ENCODE measurements at regions of chr3 and their contacts with region 1.

Region 1: DNA sequence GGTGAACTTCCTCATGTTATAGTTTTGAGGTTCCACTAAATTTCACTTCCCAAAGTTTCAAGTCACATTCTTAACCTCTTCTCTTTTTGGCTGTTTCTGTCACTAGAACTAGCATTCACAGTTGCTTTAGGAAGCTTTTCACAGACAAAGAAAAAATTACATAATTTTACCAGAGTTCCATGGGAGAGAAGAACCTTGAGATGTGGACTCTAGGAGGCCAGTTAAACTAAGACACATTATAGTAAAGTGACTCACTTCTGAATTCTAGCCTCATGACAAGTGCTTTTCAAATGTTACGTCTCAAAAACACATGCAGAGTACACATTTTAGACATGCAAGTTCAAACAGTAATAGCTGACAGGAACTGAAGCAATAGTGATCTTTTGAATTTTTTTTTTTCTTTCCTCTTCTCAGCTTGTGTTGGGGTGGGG is 39.9 kb upstream of the LRTM1 start:
- H3K4me3 Mint-ChIP-seq: peak overlapping the region; percentile 61
- H3K27ac Mint-ChIP-seq: peak overlapping the region; percentile 37
- H3K4me1 Mint-ChIP-seq: peaks cover 73% of the 10 kb centered on the region
- H3K27me3 Mint-ChIP-seq: peaks cover 16% of the 10 kb centered on the region

Region 2: DNA sequence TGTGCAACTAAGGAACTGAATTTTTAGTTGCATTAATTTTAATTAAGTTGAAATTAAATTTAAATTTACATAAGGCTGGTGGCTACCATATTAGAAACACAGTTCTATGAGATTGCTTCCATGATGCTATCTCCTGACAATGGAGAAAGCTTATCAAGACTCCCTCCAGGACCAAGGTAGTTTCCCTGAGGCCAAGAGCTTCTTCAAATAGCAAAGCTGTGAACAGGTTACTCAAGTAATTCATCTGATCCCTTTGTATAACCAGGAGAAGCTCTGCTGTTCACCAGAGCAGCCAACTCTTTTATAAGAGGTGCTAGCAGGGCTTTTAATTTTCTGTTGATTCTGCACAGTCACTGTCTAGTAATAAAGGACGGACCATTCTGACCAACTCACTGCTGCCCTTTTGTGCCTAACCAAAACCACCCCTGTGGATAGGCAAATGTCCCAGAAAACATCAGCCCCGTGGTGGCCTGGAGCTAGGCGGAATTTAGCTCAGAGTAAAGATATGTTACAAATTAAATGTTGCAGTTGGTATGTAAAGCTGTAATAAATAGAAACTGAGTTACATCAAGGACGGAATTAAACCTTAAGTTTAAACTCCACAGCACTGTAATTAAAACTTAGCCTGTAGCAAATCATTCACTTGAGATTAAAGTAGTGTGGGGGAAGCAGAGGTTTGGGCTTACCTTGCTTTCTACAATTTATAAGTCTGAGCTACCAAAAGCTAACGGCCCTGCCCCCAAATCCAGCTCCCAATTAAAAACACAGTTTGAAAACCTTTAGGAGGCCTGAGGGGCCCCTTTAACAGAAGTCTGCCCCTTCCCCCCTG is 15.7 kb after region 1 on chr3:
- intact Hi-C with region 1: loop called (anchors 2 kb)
- H3K4me3 Mint-ChIP-seq: no peak overlapping the region
- H3K27ac Mint-ChIP-seq: no peak overlapping the region
- H3K4me1 Mint-ChIP-seq: peaks cover 43% of the 10 kb centered on the region
- H3K27me3 Mint-ChIP-seq: no peaks in the 10 kb centered on the region

Region 3: DNA sequence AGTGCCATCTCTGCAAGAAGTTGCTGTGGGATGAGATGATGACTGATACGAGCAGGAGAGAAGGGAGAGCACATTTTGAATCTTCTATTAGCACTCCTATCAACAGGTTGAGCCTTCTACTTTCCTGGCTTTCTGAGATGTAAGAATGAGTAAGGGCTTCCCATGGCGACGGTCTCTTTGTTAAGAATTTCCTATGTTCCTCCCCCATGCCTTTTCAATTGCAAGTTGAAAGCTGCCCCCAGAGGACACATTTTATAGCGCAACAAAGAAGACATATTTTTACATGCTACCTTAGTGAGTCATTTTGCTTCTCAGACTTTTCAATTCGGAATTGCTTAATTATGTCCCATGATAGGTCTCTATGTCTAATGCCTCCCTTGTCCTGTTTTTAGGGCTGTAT is 31.4 kb after region 1 on chr3:
- intact Hi-C with region 1: loop called (anchors 5 kb)
- H3K4me3 Mint-ChIP-seq: no peak overlapping the region
- H3K27ac Mint-ChIP-seq: no peak overlapping the region
- H3K4me1 Mint-ChIP-seq: peaks cover 3% of the 10 kb centered on the region
- H3K27me3 Mint-ChIP-seq: no peaks in the 10 kb centered on the region

Region 4: DNA sequence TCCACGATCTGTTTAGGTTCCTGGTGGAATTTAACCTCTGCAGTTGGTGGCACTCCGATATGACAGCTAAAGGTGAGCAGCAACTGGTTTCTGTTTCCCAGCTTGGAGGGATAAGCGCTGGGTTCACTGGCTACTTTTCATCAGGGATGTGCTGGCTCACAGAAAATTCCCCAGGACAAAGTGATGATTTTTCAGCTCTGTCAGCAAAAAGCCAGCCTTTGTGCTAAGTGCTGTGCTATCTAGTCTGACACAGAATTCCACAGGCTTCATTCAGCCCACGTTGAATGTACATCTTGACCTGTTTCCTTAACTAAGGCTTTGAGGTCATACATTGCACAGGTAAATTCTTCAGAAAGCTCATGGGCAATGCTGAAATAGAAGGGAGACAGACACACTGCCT is 41.6 kb after region 1 on chr3:
- intact Hi-C with region 1: no loop called
- H3K4me3 Mint-ChIP-seq: no peak overlapping the region
- H3K27ac Mint-ChIP-seq: no peak overlapping the region
- H3K4me1 Mint-ChIP-seq: no peaks in the 10 kb centered on the region
- H3K27me3 Mint-ChIP-seq: no peaks in the 10 kb centered on the region

Region 5: DNA sequence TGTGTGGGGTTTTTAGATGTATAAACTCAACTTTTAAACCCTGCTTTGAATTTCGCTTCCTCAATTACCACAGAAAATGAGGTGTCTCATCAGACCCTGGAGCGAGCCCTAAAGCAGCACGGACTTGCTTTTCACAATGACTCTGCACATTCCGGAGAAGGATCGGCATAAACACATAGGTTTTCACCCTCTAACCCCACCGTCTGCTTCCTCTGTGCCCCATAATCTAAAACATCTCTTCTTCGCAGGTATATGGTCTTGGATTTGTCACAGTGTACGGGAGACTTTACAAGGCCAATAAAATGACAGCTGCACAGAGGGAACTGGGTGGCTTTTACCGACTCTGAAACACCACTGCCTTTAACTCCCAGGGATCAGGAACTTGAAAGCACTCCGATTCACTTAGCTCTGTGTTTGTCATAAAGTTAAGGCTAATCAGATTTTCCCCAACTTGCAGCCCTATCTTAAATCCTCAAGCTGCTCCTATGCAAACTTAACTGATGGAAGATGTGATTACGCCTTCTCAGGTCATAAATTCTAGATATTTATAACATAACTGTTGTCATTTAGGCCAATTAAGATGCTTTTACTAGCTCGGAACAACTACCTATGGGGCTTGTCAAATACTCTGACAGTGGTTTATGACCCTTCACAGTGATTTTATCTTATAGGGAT is 652.7 kb after region 1 on chr3:
- intact Hi-C with region 1: loop called (anchors 10 kb)
- H3K4me3 Mint-ChIP-seq: peak overlapping the region; percentile 42
- H3K27ac Mint-ChIP-seq: peak overlapping the region; percentile 88
- H3K4me1 Mint-ChIP-seq: peaks cover 79% of the 10 kb centered on the region
- H3K27me3 Mint-ChIP-seq: no peaks in the 10 kb centered on the region